A673 (cell line): ENCODE measurements at regions of chr12 and their contacts with region 1.

Region 1: DNA sequence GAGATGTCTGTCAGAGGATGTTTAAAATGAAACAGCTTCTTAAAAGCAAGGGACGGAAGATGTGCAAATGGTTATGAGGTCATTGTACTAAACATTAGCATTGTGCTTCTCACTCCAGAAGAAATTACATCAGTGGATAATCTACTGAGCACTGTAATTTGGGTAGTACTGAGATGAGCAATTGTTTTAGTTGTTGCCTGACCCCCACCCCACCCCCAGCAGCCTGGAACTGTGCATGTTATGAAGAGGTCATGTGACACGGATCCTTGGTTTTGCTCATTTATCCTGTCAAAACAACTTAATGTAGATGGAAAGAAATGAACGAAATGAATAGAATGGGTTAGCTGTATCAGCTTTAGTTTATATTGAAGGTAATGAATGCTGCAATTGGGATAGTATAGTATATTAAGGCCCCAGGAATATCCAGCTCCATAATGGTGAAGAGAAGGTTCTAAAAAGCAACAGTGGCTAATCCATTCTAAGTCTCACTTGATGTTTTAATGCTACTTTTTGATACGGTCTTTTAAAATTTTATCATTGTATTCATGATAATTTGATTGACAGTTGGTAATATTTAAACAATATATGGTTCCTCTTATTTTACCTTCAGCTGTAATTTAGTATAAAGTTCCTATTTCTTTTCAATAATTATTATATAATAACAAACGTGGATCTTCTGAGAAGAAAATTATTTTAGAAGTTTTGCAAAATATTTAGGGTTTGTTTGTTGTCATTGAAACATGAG is 58.5 kb downstream of the WNK1 start:
- DNase-seq: no peak
- H3K4me3 ChIP-seq: no peak overlapping the region
- H3K27ac ChIP-seq: no peak overlapping the region
- H3K4me1 ChIP-seq: peaks cover 29% of the 10 kb centered on the region
- H3K27me3 ChIP-seq: no peaks in the 10 kb centered on the region
- CTCF ChIP-seq: no peak

Region 2: GRCh38 chr12:575948-576612 is 234.8 kb before region 1 on chr12:
- CTCF ChIA-PET with region 1: interaction called, 8 read pairs
- POLR2A ChIA-PET with region 1: no interaction called
- intact Hi-C with region 1: loop called (anchors 1 kb)
- DNase-seq: peak; percentile 89
- H3K4me3 ChIP-seq: no peak overlapping the region
- H3K27ac ChIP-seq: no peak overlapping the region
- H3K4me1 ChIP-seq: peaks cover 17% of the 10 kb centered on the region
- H3K27me3 ChIP-seq: no peaks in the 10 kb centered on the region
- CTCF ChIP-seq: peak; percentile 99

Region 3: GRCh38 chr12:614411-614970 is 196.4 kb before region 1 on chr12:
- CTCF ChIA-PET with region 1: interaction called, 9 read pairs
- POLR2A ChIA-PET with region 1: no interaction called
- intact Hi-C with region 1: loop called (anchors 2 kb)
- DNase-seq: peak; percentile 46
- H3K4me3 ChIP-seq: no peak overlapping the region
- H3K27ac ChIP-seq: no peak overlapping the region
- H3K4me1 ChIP-seq: no peaks in the 10 kb centered on the region
- H3K27me3 ChIP-seq: no peaks in the 10 kb centered on the region
- CTCF ChIP-seq: peak; percentile 58

Region 4: DNA sequence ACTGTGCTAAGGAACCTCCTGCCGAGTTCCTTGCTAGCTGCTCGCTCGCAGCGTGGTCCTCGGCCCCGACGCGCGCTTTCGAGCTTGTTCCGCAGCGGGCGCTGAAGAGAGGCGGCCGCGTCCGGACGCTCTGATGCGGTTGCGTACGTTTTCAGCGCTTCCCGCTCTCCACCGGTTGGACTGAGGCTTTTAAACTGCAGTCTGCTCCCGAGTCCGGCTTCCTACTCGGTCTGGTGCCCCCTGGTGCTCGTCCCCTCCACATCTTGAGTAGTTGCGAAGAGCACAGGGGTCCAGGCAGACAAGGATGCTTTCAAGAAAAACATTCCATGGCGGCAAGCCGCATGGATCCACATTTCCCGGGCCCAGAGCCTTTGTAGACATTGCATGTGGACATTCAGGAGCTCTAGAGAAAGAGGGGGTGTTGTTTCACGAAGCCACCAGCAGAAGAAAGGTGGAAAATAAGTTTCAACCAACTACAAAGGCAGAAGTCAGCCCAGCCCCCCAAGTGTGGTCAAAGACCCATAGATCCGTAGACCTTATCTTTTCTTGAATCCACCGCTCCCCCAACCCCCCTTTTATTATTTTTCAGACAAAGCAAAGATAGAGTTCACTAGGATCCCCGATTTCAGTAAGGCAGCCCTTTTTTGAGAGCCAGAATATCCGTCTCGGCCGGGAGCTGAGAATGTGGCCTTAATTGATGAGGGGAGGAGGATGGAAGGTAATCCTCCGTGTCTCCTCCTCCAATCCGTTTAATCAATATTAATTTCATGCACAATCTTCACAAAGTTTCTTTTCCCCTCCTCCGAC is 59.4 kb before region 1 on chr12:
- CTCF ChIA-PET with region 1: interaction called, 19 read pairs
- POLR2A ChIA-PET with region 1: no interaction called
- intact Hi-C with region 1: loop called (anchors 5 kb)
- DNase-seq: peak; percentile 98
- H3K4me3 ChIP-seq: peak overlapping the region; percentile 92
- H3K27ac ChIP-seq: peak overlapping the region; percentile 73
- H3K4me1 ChIP-seq: peaks cover 19% of the 10 kb centered on the region
- H3K27me3 ChIP-seq: no peaks in the 10 kb centered on the region
- CTCF ChIP-seq: peak; percentile 80

Region 5: GRCh38 chr12:1093166-1093751 is 282.4 kb after region 1 on chr12:
- CTCF ChIA-PET with region 1: interaction called, 3 read pairs
- POLR2A ChIA-PET with region 1: no interaction called
- intact Hi-C with region 1: loop called (anchors 10 kb)
- DNase-seq: peak; percentile 79
- H3K4me3 ChIP-seq: no peak overlapping the region
- H3K27ac ChIP-seq: no peak overlapping the region
- H3K4me1 ChIP-seq: no peaks in the 10 kb centered on the region
- H3K27me3 ChIP-seq: no peaks in the 10 kb centered on the region
- CTCF ChIP-seq: peak; percentile 84

Region 6: GRCh38 chr12:1690578-1691122 is 879.8 kb after region 1 on chr12 and contains the start of gene ADIPOR2:
- CTCF ChIA-PET with region 1: no interaction called
- POLR2A ChIA-PET with region 1: no interaction called
- intact Hi-C with region 1: no loop called
- DNase-seq: peak; percentile 99
- H3K4me3 ChIP-seq: peak within 1 kb of the TSS; percentile 87
- H3K27ac ChIP-seq: peak within 1 kb of the TSS; percentile 97
- H3K4me1 ChIP-seq: peaks cover 14% of the 10 kb centered on the region
- H3K27me3 ChIP-seq: no peaks in the 10 kb centered on the region
- CTCF ChIP-seq: no peak
- total RNA-seq, gene ADIPOR2: 74.4 and 84.0 TPM in 2 replicates